Activated naive CD8-positive, alpha-beta T cell treated with anti-CD3 and anti-CD28 coated beads, Interleukin-2, amount 10 ng/mL, durations not matched to agents 7 days and 5 days (primary cell): ENCODE measurements at regions of chr12 and their contacts with region 1.

Region 1: GRCh38 chr12:39628836-39629235 is 9.2 kb upstream of the ABCD2 start:
- DNase-seq: no peak
- ATAC-seq: peak; percentile 93
- H3K4me3 Mint-ChIP-seq: peak overlapping the region; percentile 74
- H3K27ac Mint-ChIP-seq: peak overlapping the region; percentile 86
- H3K4me1 Mint-ChIP-seq: peaks cover 41% of the 10 kb centered on the region
- H3K27me3 Mint-ChIP-seq: no peaks in the 10 kb centered on the region

Region 2: GRCh38 chr12:39682689-39683477 is 54.0 kb after region 1 on chr12:
- POLR2A ChIA-PET with region 1: interaction called, 28 read pairs
- DNase-seq: no peak
- ATAC-seq: peak; percentile 24
- H3K4me3 Mint-ChIP-seq: peak overlapping the region; percentile 81
- H3K27ac Mint-ChIP-seq: peak overlapping the region; percentile 88
- H3K4me1 Mint-ChIP-seq: peaks cover 36% of the 10 kb centered on the region
- H3K27me3 Mint-ChIP-seq: no peaks in the 10 kb centered on the region

Region 3: DNA sequence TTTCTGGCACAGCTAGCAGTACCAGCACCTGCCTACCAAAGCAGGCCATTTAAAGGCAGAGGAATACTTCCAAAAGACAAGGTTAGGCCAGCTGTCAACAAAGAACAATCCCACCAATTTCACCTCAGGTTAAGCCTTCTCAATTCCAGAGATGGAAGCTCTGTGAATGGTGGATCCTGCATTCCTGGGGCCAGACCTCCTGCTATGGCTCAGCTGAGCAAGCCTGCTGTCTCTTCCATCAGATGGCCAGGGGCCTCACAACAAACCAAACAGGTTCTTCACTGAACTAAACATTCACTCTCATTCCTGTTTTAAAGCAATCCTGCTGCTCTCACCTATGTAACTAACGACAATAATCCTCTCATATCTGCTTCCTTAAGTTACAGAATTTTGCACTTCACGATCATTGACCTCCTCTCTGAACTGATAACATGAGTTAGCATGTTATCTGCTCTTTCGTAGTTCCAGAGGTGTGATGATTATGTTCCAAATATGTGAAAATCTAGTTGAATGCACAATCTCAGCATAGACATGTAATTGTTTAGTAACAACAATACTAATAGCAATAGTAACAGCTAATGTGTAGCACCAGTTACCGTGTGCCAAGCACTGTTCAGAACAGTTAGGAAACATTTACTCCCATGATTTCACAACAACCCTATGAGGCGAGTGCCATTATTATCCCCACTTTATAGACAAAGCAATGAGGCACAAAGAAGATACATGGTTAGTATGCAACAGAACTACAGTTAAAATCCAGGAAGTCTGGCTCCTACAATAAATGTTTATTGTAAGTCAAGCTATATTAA is 403.8 kb after region 1 on chr12:
- POLR2A ChIA-PET with region 1: no interaction called
- DNase-seq: no peak
- ATAC-seq: no peak
- H3K4me3 Mint-ChIP-seq: no peak overlapping the region
- H3K27ac Mint-ChIP-seq: no peak overlapping the region
- H3K4me1 Mint-ChIP-seq: peaks cover 7% of the 10 kb centered on the region
- H3K27me3 Mint-ChIP-seq: no peaks in the 10 kb centered on the region